Right ventricle myocardium inferior (tissue), 1 donor: ENCODE measurements at regions of chr9 and their contacts with region 1.

Region 1: DNA sequence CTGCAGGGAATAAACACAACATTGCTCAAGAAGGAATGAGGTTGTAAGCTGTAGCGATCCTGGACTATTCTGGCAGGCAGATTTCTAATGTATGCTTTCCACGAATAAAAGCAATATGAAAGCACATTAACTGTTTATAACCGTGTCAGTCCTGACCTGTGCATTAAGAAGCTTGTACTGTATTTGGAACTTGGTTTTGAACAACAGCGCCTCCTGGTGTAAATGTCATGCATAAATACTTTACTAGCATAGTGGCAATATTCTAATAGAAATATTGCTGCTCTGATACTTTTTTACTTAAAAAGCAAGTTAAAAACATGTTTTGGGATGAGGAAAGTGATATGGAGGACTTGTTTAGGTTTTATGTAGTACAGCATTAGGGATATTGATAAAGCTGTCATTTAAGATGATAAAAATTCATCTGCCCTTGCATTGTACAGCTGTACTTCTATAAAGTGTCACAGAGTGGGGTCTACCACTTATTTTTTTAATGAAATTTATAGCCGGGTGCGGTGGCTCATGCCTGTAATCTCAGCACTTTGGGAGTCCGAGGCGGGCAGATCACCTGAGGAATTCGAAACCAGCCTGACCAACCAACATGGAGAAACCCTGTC is 70.7 kb upstream of the GNE start:
- DNase-seq: no peak
- ATAC-seq: no peak

Region 2: DNA sequence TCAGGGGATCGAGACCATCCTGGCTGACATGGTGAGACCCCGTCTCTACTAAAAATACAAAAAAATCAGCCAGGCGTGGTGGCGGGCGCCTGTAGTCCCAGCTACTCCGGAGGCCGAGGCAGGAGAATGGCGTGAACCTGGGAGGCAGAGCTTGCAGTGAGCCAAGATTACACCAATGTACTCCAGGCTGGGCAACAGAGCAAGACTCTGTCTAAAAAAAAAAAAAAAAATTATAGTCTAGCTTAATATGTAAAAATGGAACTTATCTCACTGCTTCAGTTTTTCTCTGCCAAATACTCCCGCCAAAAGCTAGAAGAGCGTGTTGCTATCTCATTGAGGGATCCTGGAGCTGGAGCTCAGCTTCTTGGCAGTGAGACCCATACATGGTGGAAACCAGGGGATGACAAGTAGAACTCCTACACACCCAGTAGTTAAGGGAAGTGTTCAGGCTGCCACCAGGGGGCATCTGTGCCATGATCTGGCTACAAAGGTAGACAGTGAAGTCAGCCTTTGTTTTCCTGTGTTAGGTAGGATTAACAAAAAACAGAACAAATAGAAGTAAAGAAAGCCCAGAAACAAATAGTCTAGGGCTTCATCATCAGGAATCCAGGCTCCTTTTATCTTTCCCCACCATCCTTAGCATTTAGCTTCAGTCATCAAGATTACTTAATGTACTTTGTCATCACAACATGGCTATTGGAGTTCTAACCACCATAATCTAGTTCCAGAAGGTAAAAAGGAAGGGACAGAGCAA is 226.0 kb before region 1 on chr9:
- intact Hi-C with region 1: loop called (anchors 10 kb)
- DNase-seq: peak; percentile 91
- ATAC-seq: peak; percentile 91

Region 3: DNA sequence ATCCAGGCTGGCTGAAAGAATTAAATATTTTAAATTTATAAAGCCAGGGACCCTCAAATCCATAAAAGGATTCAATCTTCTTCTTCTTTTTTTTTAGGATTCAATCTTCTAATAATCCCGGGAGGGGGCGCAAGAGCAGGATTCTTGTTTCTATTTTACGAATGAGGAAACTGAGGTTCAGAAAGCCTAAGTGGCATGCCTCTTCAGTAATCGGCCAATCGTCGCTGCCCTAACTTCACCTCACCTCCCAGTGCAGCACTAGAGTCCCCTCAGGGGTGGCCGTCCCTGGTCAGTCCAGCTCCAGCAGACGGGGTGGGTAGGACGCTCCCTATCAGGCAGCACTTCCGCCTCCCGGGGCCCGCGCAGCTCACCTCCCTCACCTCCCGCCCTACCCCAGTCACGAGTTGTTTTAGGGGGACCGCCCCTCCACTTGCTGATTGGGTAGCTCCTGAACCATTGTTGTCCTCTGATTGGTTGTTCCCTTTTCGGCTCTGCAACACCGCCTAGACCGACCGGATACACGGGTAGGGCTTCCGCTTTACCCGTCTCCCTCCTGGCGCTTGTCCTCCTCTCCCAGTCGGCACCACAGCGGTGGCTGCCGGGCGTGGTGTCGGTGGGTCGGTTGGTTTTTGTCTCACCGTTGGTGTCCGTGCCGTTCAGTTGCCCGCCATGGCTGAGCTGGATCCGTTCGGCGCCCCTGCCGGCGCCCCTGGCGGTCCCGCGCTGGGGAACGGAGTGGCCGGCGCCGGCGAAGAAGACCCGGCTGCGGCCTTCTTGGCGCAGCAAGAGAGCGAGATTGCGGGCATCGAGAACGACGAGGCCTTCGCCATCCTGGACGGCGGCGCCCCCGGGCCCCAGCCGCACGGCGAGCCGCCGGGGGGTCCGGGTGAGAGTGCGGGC is 138.3 kb before region 1 on chr9 and contains the start of gene CLTA:
- intact Hi-C with region 1: loop called (anchors 2 kb)
- DNase-seq: peak; percentile 97
- ATAC-seq: peak; percentile 99
- total RNA-seq, gene CLTA: 69.4 TPM

Region 4: GRCh38 chr9:36249189-36249588 is 79.7 kb before region 1 on chr9:
- intact Hi-C with region 1: loop called (anchors 2 kb)
- DNase-seq: no peak
- ATAC-seq: no peak